ENCODE measurements at regions of chr7 and their contacts with region 1.

Region 1: DNA sequence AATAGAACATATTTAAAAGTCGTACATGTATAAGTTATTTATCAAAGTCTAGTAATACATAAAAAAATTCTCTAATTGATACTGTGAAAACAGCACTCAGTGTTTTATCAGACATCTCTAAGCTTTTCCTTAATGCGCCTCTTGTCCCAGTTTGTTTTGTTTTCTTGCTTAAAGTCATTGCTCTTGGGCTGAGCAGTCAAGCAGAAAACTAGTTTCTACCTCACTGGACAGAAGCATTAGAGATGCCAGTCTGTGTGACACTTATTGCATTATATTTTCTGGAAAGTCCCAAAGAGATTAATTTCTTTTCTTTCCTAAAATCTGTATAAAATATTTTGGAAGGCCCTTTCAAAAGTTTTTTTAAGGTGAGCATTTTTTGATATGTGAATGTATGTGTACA is 236.2 kb downstream of the PCLO start:
- DNase-seq: peak; percentile 65
- H3K4me3 ChIP-seq: peak overlapping the region; percentile 34
- H3K27ac ChIP-seq: peak overlapping the region; percentile 85
- H3K4me1 ChIP-seq: peaks cover 61% of the 10 kb centered on the region
- CTCF ChIP-seq: no peak

Region 2: GRCh38 chr7:82945480-82945879 is 19.0 kb after region 1 on chr7:
- CTCF ChIA-PET with region 1: no interaction called
- POLR2A ChIA-PET with region 1: interaction called, 18 read pairs
- intact Hi-C with region 1: no loop called
- DNase-seq: no peak
- H3K4me3 ChIP-seq: no peak overlapping the region
- H3K27ac ChIP-seq: no peak overlapping the region
- H3K4me1 ChIP-seq: no peaks in the 10 kb centered on the region
- CTCF ChIP-seq: no peak

Region 3: GRCh38 chr7:83162402-83163256 is 236.2 kb after region 1 on chr7 and contains the start of gene PCLO:
- CTCF ChIA-PET with region 1: no interaction called
- POLR2A ChIA-PET with region 1: no interaction called
- intact Hi-C with region 1: loop called (anchors 10 kb)
- DNase-seq: peak; percentile 77
- H3K4me3 ChIP-seq: peak within 1 kb of the TSS; percentile 76
- H3K27ac ChIP-seq: no peak within 1 kb of the TSS
- H3K4me1 ChIP-seq: peaks cover 9% of the 10 kb centered on the region
- CTCF ChIP-seq: no peak
- total RNA-seq, gene PCLO: 0.35 and 0.62 TPM in 2 replicates

Measured in OCI-LY7 (cell line).